ENCODE measurements at regions of chr2 and their contacts with region 1.

Region 1: DNA sequence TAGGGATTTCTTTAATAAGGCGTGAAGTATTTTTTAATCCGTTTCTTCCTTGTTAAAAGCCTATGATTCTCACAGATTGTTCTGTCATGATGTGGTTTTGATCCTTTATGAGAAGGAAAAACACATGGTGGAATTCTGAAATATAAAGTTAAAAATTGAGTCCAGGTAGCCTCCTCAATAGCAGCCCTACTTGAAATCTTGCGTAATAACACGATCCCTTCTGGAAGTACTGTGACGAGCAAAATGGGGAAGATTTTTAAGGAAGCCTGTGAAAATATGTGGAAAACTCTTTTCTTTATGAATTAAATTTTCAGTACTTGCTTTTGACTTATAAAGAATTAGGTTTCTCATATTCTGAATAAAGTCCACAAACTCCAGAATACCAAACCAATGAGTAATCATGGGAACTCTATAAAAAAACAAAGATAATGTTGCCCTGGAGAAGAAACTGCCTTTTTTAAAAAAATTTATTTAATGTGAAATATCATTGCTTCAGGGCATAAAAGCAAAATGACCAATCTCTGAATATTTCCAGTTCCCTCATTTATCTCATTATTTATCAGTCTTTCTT is 476.4 kb upstream of the ZEB2 start:
- DNase-seq: no peak
- H3K4me3 ChIP-seq: no peak overlapping the region
- H3K27ac ChIP-seq: peak overlapping the region; percentile 52 to 62
- H3K4me1 ChIP-seq: no peaks in the 10 kb centered on the region
- H3K27me3 ChIP-seq: no peaks in the 10 kb centered on the region
- CTCF ChIP-seq: no peak
- POLR2A ChIP-seq: no peak

Region 2: GRCh38 chr2:144950899-144951560 is 45.3 kb before region 1 on chr2:
- intact Hi-C with region 1: no loop called
- DNase-seq: no peak
- H3K4me3 ChIP-seq: no peak overlapping the region
- H3K27ac ChIP-seq: no peak overlapping the region
- H3K4me1 ChIP-seq: no peaks in the 10 kb centered on the region
- H3K27me3 ChIP-seq: no peaks in the 10 kb centered on the region
- CTCF ChIP-seq: no peak
- POLR2A ChIP-seq: no peak

Region 3: DNA sequence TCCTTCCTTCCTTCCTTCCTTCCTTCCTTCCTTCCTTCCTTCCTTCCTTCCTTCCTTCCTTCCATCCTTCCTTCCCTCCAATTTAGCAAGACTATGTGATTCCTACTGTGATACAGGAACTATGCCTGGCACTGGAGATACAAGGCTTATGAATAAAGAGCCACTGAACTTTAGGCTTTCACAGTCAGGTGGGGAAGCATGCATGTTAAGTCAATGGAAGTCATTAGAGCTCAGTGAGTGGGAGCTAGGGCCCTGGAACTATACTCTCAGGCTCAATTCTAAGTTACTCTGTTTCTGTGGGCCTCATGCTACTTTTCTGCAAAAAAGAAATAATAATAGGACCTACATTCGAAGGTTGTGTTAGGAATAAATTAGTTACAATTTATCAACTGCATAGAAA is 51.2 kb after region 1 on chr2:
- intact Hi-C with region 1: loop called (anchors 2 kb)
- DNase-seq: no peak
- H3K4me3 ChIP-seq: no peak overlapping the region
- H3K27ac ChIP-seq: no peak overlapping the region
- H3K4me1 ChIP-seq: no peaks in the 10 kb centered on the region
- H3K27me3 ChIP-seq: no peaks in the 10 kb centered on the region
- CTCF ChIP-seq: no peak
- POLR2A ChIP-seq: no peak

Measured in breast epithelium (tissue), 4 donors.